T-cell (primary cell): ENCODE measurements at regions of chr19 and their contacts with region 1.

Region 1: DNA sequence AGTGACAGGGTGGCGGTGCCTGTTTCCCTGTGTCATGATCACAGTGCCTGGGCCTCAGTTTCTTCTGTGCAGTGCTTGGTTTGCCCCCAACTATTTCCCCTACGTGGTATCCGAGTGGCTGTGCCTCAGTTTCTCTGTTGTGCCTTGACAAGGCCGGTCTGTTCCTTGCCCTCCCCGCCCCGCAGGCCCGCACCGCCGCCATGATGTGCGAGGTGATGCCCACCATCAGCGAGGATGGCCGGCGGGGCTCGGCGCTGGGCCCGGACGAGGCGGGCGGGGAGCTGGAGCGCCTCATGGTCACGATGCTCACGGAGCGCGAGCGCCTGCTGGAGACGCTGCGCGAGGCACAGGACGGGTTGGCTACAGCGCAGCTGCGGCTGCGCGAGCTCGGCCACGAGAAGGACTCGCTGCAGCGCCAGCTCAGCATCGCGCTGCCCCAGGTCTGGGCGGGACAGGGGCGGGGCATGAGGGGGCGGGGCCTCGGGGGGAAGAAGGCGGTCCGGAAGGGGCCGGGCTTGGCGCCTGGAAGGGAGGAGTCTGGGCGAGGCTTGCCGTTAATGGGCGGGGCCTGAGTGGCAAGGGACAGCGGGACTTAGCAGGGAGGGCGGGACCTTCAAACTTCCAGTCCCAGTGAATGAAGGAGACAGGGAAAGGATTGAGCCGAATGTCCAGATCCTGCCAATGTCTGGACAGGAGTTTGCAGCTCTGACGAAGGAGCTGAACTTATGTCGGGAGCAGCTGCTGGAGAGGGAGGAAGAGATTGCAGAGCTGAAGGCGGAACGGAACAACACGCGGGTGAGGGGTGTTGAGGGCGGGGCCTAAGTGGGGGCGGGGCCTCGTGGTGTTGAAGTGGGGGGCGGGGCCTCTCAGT is 8.6 kb downstream of the PPFIA3 start:
- DNase-seq: peak; percentile 81 to 96 (median 90)
- ATAC-seq: peak; percentile 92 to 97 (median 94)
- H3K4me3 ChIP-seq: peak overlapping the region; percentile 35 to 41
- H3K4me3 Mint-ChIP-seq: peak overlapping the region; percentile 78 to 85 (median 78)
- H3K27ac ChIP-seq: no peak overlapping the region
- H3K27ac Mint-ChIP-seq: peak overlapping the region; percentile 73 to 77
- H3K4me1 ChIP-seq: peaks cover 0 to 15% of the 10 kb centered on the region in 2 experiments
- H3K4me1 Mint-ChIP-seq: peaks cover 15 to 20% (median 17%) of the 10 kb centered on the region in 3 donors
- H3K27me3 ChIP-seq: peaks cover 0 to 4% of the 10 kb centered on the region in 2 experiments
- H3K27me3 Mint-ChIP-seq: no peaks in the 10 kb centered on the region

Region 2: DNA sequence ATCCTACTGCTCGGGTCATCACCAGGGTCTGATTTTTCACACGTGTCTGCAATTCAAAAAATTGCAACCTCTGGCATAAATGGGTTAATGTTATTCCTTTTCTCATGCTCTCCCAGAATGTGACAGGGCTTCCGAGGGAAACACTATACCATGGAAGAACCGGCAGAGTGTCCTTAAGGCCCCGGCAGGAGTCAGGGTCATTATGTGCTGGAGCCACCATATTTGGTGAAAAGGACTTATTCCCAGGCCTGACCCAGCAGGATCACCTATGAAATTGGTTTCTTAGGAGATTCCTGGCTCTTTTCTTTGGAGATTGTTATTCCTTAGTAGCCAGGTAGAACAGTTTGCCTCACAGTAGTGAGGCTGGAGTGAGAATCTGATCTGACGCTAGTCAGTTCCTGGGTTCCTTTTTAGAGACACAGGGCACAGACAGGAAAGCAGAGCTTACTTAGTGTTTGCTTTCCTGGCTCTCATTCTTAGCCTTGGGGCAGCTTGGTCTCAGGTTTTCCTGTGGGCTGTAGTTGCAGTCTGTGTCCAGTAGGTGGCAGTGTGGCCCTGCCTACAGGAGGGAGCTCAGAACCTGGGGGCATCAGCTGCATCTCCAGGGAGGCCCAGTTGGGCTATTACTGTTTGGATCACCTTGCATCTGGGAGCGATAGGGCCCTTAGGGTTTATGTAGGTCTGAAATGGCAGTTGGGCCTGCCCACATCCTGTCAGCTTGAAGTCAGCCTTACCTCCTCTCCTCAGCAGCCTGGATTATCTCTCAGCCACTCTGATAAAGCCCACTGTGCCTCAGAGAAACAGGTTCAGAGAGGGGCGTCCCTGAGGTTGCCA is 30.2 kb before region 1 on chr19:
- CTCF ChIA-PET with region 1: interaction called in 1 of 2 experiments, 10 read pairs
- POLR2A ChIA-PET with region 1: interaction called in 1 of 2 experiments, 5 read pairs
- DNase-seq: peak; percentile 42 to 86 (median 66)
- ATAC-seq: peak; percentile 82 to 87 (median 84)
- H3K4me3 ChIP-seq: no peak overlapping the region
- H3K4me3 Mint-ChIP-seq: no peak overlapping the region
- H3K27ac ChIP-seq: no peak overlapping the region
- H3K27ac Mint-ChIP-seq: no peak overlapping the region
- H3K4me1 ChIP-seq: peaks cover 0 to 9% of the 10 kb centered on the region in 2 experiments
- H3K4me1 Mint-ChIP-seq: peaks cover 7 to 12% (median 8%) of the 10 kb centered on the region in 3 donors
- H3K27me3 ChIP-seq: no peaks in the 10 kb centered on the region
- H3K27me3 Mint-ChIP-seq: no peaks in the 10 kb centered on the region

Region 3: GRCh38 chr19:49113762-49114629 is 13.9 kb before region 1 on chr19 and contains the start of gene LIN7B:
- CTCF ChIA-PET with region 1: interaction called, 3 to 21 read pairs
- POLR2A ChIA-PET with region 1: interaction called in 1 of 2 experiments, 7 read pairs
- DNase-seq: peak; percentile 45 to 90 (median 68)
- ATAC-seq: peak; percentile 65 to 70 (median 69)
- H3K4me3 ChIP-seq: peak within 1 kb of the TSS; percentile 60 to 73
- H3K4me3 Mint-ChIP-seq: peak within 1 kb of the TSS; percentile 79 to 85 (median 84)
- H3K27ac ChIP-seq: peak within 1 kb of the TSS; percentile 7
- H3K27ac Mint-ChIP-seq: peak within 1 kb of the TSS; percentile 86 to 89
- H3K4me1 ChIP-seq: peaks cover 6 to 34% of the 10 kb centered on the region in 2 experiments
- H3K4me1 Mint-ChIP-seq: peaks cover 36 to 46% (median 36%) of the 10 kb centered on the region in 3 donors
- H3K27me3 ChIP-seq: no peaks in the 10 kb centered on the region
- H3K27me3 Mint-ChIP-seq: no peaks in the 10 kb centered on the region
- total RNA-seq, gene LIN7B: 8.1 to 17.8 (median 12.9) TPM

Region 4: DNA sequence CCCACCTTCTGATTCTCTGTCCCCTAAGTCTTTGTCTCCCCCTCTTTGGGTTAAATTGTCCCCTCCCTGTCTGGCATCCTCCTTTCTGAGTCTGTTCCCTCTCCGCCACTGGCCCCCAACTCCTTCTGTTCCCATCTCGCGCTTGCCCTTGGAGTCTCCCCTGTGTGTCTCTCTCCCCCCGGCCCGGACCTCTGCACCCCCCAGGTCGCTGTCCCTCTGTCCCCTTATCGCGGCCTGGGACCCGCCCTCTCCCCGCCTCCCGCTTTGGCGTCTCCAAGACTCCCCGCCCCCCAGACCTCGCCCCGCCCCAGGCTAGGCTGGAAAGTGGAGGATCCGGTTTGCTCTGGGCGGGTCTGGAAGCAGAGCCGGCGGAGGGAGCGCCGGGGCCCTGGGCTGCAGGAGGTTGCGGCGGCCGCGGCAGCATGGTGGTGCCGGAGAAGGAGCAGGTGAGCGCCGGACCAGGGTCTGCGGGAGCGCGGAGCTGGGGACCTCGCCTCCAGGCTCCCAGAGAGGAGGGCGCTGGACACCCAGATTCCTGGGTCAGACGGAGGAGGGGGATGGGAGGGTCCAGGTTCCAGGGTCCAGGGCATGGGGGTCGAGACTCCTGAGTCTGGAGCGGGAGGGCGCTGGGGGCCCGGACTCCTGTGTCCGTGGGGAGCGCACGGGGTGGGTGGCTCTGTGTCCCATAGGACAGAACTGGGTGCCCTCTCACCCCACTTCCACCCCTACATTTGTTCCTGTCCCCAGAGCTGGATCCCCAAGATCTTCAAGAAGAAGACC is 29.7 kb after region 1 on chr19 and contains the start of gene TRPM4:
- CTCF ChIA-PET with region 1: no interaction called
- POLR2A ChIA-PET with region 1: no interaction called
- DNase-seq: peak in 12 of 35 experiments; percentile 21 to 44 (median 32)
- ATAC-seq: peak; percentile 46 to 78 (median 63)
- H3K4me3 ChIP-seq: peak within 1 kb of the TSS in 1 of 2 donors; percentile 2
- H3K4me3 Mint-ChIP-seq: peak within 1 kb of the TSS; percentile 42 to 62 (median 44)
- H3K27ac ChIP-seq: no peak within 1 kb of the TSS
- H3K27ac Mint-ChIP-seq: peak within 1 kb of the TSS in 1 of 2 donors; percentile 71
- H3K4me1 ChIP-seq: peaks cover 2 to 12% of the 10 kb centered on the region in 2 experiments
- H3K4me1 Mint-ChIP-seq: peaks cover 6 to 9% (median 8%) of the 10 kb centered on the region in 3 donors
- H3K27me3 ChIP-seq: peaks cover 5 to 85% of the 10 kb centered on the region in 2 experiments
- H3K27me3 Mint-ChIP-seq: peaks cover 65 to 70% of the 10 kb centered on the region in 2 donors
- total RNA-seq, gene TRPM4: 0.43 to 0.89 (median 0.50) TPM in 3 of 5 donors, not detected in the others